Activated CD8-positive, alpha-beta T cell treated with anti-CD3 and anti-CD28 coated beads for 36 hours (primary cell): ENCODE measurements at regions of chr11 and their contacts with region 1.

Region 1: GRCh38 chr11:121194731-121195596 is 93.9 kb downstream of the TECTA start:
- DNase-seq: peak; percentile 63
- ATAC-seq: peak; percentile 66
- H3K4me3 Mint-ChIP-seq: no peak overlapping the region
- H3K27ac Mint-ChIP-seq: no peak overlapping the region
- H3K4me1 Mint-ChIP-seq: no peaks in the 10 kb centered on the region
- H3K27me3 Mint-ChIP-seq: peaks cover 12% of the 10 kb centered on the region
- CTCF ChIP-seq: peak; percentile 92

Region 2: GRCh38 chr11:120929664-120930154 is 265.3 kb before region 1 on chr11:
- CTCF ChIA-PET with region 1: interaction called, 7 read pairs
- POLR2A ChIA-PET with region 1: no interaction called
- intact Hi-C with region 1: loop called (anchors 5 kb)
- DNase-seq: peak; percentile 64
- ATAC-seq: peak; percentile 70
- H3K4me3 Mint-ChIP-seq: no peak overlapping the region
- H3K27ac Mint-ChIP-seq: no peak overlapping the region
- H3K4me1 Mint-ChIP-seq: no peaks in the 10 kb centered on the region
- H3K27me3 Mint-ChIP-seq: peaks cover 2% of the 10 kb centered on the region
- CTCF ChIP-seq: peak; percentile 80

Region 3: GRCh38 chr11:121180183-121180582 is 14.8 kb before region 1 on chr11:
- CTCF ChIA-PET with region 1: interaction called, 19 read pairs
- POLR2A ChIA-PET with region 1: interaction called, 3 read pairs
- intact Hi-C with region 1: no loop called
- DNase-seq: no peak
- ATAC-seq: no peak
- H3K4me3 Mint-ChIP-seq: no peak overlapping the region
- H3K27ac Mint-ChIP-seq: no peak overlapping the region
- H3K4me1 Mint-ChIP-seq: no peaks in the 10 kb centered on the region
- H3K27me3 Mint-ChIP-seq: no peaks in the 10 kb centered on the region
- CTCF ChIP-seq: no peak

Region 4: GRCh38 chr11:121213362-121213893 is 18.5 kb after region 1 on chr11:
- CTCF ChIA-PET with region 1: interaction called, 15 read pairs
- POLR2A ChIA-PET with region 1: no interaction called
- intact Hi-C with region 1: no loop called
- DNase-seq: no peak
- ATAC-seq: no peak
- H3K4me3 Mint-ChIP-seq: no peak overlapping the region
- H3K27ac Mint-ChIP-seq: no peak overlapping the region
- H3K4me1 Mint-ChIP-seq: no peaks in the 10 kb centered on the region
- H3K27me3 Mint-ChIP-seq: peaks cover 27% of the 10 kb centered on the region
- CTCF ChIP-seq: no peak